MCF 10A (cell line): ENCODE measurements at regions of chr7 and their contacts with region 1.

Region 1: GRCh38 chr7:31192986-31193385 is 140.9 kb downstream of the ADCYAP1R1 start:
- DNase-seq: peak; percentile 64
- H3K4me3 Mint-ChIP-seq: no peak overlapping the region
- H3K27ac Mint-ChIP-seq: no peak overlapping the region
- H3K4me1 Mint-ChIP-seq: no peaks in the 10 kb centered on the region
- H3K27me3 Mint-ChIP-seq: peaks cover 22% of the 10 kb centered on the region
- CTCF ChIP-seq: peak; percentile 67

Region 2: DNA sequence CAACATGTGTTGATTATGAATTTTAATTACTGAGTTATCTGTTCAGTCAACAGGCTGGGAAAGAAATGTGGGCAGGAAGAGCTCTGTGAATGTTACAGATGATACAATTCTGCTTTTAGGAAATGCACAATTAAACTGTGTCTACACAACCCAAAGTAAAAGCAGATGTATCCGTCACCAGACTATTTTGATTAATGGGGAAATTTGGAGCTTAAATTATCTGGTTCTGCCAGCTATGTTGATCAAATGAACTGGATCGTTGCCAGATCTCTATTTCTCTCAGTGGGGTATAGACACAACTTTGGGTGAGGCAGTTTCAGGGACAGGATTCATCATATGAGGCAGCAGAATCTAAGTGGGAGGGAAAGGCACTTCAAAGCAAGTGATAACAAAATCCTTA is 11.1 kb after region 1 on chr7:
- CTCF ChIA-PET with region 1: interaction called, 10 read pairs
- POLR2A ChIA-PET with region 1: no interaction called
- intact Hi-C with region 1: no loop called
- DNase-seq: no peak
- H3K4me3 Mint-ChIP-seq: no peak overlapping the region
- H3K27ac Mint-ChIP-seq: no peak overlapping the region
- H3K4me1 Mint-ChIP-seq: no peaks in the 10 kb centered on the region
- H3K27me3 Mint-ChIP-seq: no peaks in the 10 kb centered on the region
- CTCF ChIP-seq: no peak

Region 3: GRCh38 chr7:31358467-31358866 is 165.5 kb after region 1 on chr7:
- CTCF ChIA-PET with region 1: no interaction called
- POLR2A ChIA-PET with region 1: no interaction called
- intact Hi-C with region 1: no loop called
- DNase-seq: no peak
- H3K4me3 Mint-ChIP-seq: no peak overlapping the region
- H3K27ac Mint-ChIP-seq: no peak overlapping the region
- H3K4me1 Mint-ChIP-seq: no peaks in the 10 kb centered on the region
- H3K27me3 Mint-ChIP-seq: peaks cover 13% of the 10 kb centered on the region
- CTCF ChIP-seq: no peak

Region 4: GRCh38 chr7:31488562-31489203 is 295.7 kb after region 1 on chr7:
- CTCF ChIA-PET with region 1: interaction called, 7 read pairs
- POLR2A ChIA-PET with region 1: no interaction called
- intact Hi-C with region 1: loop called (anchors 1 kb)
- DNase-seq: peak; percentile 65
- H3K4me3 Mint-ChIP-seq: no peak overlapping the region
- H3K27ac Mint-ChIP-seq: no peak overlapping the region
- H3K4me1 Mint-ChIP-seq: no peaks in the 10 kb centered on the region
- H3K27me3 Mint-ChIP-seq: no peaks in the 10 kb centered on the region
- CTCF ChIP-seq: peak; percentile 77

Region 5: DNA sequence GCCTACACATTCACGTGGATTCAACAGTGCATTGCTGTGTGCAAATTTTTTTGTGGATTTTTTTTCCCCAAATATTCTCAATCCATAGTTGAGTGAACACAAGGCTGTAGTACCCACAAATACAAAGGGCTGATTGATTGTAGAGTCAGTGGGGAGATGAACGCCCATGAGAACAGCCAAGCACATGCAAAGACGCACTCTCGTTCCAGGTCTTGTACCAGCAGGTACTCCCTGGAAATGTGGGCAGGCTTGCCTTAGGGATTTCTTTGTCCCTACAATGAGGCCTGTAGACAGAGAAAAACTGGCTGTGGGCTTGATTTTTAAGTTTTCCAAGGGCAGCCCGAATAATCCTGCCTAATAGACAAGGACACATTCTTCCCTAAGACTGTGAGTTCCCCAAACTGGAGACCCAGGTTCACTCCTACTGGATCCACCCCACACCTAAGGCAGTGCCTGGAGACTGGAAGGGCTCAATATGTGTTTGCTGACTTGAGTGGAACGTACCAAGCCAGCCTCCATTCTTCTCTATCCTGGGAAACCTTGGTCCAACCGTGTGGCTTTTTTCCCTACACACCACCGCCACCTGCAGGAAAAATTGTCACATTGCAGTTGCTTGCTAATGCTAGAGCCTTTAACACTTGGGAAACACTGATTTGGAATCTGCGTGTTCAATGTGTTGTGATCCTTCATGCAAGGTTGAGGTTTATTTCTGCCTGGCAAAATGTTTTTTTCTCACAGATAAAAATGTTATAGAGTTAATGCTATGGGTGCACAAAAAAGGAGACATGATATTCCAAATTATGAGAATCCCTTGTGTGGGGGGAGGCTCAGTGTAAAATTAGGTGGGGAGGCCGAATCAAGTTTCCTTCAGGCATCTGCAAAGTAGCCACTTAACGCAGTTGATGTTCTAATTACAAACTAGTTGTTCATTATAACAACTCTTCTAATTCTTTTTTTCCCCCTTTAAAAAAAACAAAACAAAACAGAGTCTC is 543.3 kb after region 1 on chr7:
- CTCF ChIA-PET with region 1: interaction called, 5 read pairs
- POLR2A ChIA-PET with region 1: no interaction called
- intact Hi-C with region 1: loop called (anchors 1 kb)
- DNase-seq: peak; percentile 81
- H3K4me3 Mint-ChIP-seq: no peak overlapping the region
- H3K27ac Mint-ChIP-seq: no peak overlapping the region
- H3K4me1 Mint-ChIP-seq: peaks cover 6% of the 10 kb centered on the region
- H3K27me3 Mint-ChIP-seq: peaks cover 24% of the 10 kb centered on the region
- CTCF ChIP-seq: peak; percentile 86